ENCODE measurements at regions of chr17 and their contacts with region 1.

Region 1: DNA sequence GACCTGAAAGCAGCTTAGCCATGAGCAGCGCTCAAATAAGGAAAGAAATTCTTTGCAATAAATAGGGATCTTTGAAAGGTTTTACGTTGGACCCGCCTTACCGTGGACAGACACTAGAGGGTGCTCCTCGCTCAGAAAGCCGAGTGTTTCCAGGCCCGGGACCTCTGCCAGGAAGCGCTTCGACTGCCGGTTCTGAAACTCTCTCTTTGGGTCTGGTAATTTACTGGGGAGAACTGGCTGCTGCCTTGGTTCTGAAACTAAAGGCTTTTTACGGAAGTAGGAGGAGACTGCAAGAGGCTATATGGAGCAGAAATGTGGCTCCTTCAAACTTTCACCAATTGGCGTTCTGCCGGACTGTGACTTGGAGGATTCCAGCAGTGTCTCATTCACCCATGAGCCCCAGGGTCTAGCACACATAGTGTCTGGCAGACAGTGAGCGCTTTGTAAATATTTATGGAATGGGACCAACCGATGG is 45.6 kb upstream of the HOXB9 start:
- DNase-seq: peak; percentile 76
- H3K4me3 ChIP-seq: peak overlapping the region; percentile 35 to 62; a peak in 3 of 4 replicates
- H3K27ac ChIP-seq: no peak overlapping the region
- H3K4me1 ChIP-seq: no peaks in the 10 kb centered on the region
- H3K27me3 ChIP-seq: peaks cover 79% of the 10 kb centered on the region
- CTCF ChIP-seq: peak; percentile 99
- EP300 ChIP-seq: no peak
- RAD21 ChIP-seq: peak; percentile 86

Region 2: GRCh38 chr17:48711102-48711501 is 39.4 kb after region 1 on chr17:
- CTCF ChIA-PET with region 1: interaction called, 14 read pairs
- POLR2A ChIA-PET with region 1: interaction called, 3 read pairs
- DNase-seq: no peak
- H3K4me3 ChIP-seq: no peak overlapping the region
- H3K27ac ChIP-seq: no peak overlapping the region
- H3K4me1 ChIP-seq: no peaks in the 10 kb centered on the region
- H3K27me3 ChIP-seq: peaks cover 97% of the 10 kb centered on the region
- CTCF ChIP-seq: no peak
- EP300 ChIP-seq: no peak
- RAD21 ChIP-seq: no peak

Region 3: GRCh38 chr17:48718761-48719641 is 47.3 kb after region 1 on chr17:
- CTCF ChIA-PET with region 1: interaction called, 18 read pairs
- POLR2A ChIA-PET with region 1: no interaction called
- DNase-seq: peak; percentile 38
- H3K4me3 ChIP-seq: no peak overlapping the region
- H3K27ac ChIP-seq: no peak overlapping the region
- H3K4me1 ChIP-seq: no peaks in the 10 kb centered on the region
- H3K27me3 ChIP-seq: peaks cover 94% of the 10 kb centered on the region
- CTCF ChIP-seq: no peak
- EP300 ChIP-seq: no peak
- RAD21 ChIP-seq: no peak

Region 4: GRCh38 chr17:48860034-48860433 is 188.3 kb after region 1 on chr17:
- CTCF ChIA-PET with region 1: interaction called, 14 read pairs
- POLR2A ChIA-PET with region 1: no interaction called
- DNase-seq: no peak
- H3K4me3 ChIP-seq: no peak overlapping the region
- H3K27ac ChIP-seq: no peak overlapping the region
- H3K4me1 ChIP-seq: no peaks in the 10 kb centered on the region
- H3K27me3 ChIP-seq: no peaks in the 10 kb centered on the region
- CTCF ChIP-seq: peak; percentile 46
- EP300 ChIP-seq: no peak
- RAD21 ChIP-seq: no peak

Measured in SK-N-SH (cell line).